ENCODE measurements at regions of chr20 and their contacts with region 1.

Region 1: GRCh38 chr20:17504898-17505635 is 26.1 kb downstream of the BFSP1 start:
- DNase-seq: peak; percentile 82

Region 2: GRCh38 chr20:17995967-17996819 is 491.1 kb after region 1 on chr20:
- intact Hi-C with region 1: loop called (anchors 5 kb)
- DNase-seq: no peak

Region 3: DNA sequence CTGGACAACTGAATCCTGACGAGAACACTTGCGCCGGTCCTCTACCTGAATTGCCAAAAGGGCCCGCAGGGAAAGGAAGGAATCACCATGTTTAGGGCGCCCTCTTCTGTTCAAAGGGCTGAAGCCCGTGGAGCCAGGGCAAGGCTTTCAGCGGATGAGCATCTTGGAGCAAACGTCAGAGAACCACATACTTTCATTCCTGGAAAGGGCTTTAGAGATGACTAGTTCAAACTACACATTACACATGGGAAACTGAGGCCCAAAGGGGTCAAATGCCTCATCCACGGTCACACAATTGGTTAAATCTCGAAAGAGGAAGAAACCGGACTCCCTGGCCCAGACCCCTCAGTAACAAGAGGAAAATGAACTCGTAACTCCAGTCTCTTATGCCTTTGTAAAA is 771.8 kb after region 1 on chr20:
- intact Hi-C with region 1: loop called (anchors 5 kb)
- DNase-seq: no peak